ENCODE measurements at regions of chr1 and their contacts with region 1.

Region 1: DNA sequence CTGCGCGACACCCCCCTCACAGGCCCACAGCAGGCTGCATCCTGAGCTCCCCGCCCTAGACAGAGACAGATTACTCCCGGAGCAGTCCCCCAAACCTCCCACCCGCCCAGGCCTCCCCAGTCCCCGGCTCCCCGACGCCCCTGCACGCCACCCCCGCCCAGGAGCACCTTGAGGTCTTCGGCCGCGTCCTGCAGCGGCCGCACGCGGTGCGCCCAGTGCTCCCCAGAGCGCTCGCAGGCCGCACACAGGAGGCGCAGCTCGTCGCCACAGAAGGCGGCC is 709 bp downstream of the TRIM11 start:
- DNase-seq: peak in 3 of 4 experiments; percentile 43 to 68 (median 68)
- ATAC-seq: peak; percentile 75
- H3K4me3 ChIP-seq: peak overlapping the region; percentile 100
- H3K27ac ChIP-seq: peak overlapping the region; percentile 96
- H3K4me1 ChIP-seq: peaks cover 47 to 75% of the 10 kb centered on the region in 2 experiments
- H3K27me3 ChIP-seq: no peaks in the 10 kb centered on the region
- CTCF ChIP-seq: no peak; a peak in 1 of 6 replicates
- EP300 ChIP-seq: no peak
- POLR2A ChIP-seq: no peak
- RAD21 ChIP-seq: no peak

Region 2: GRCh38 chr1:228340686-228341449 is 65.1 kb before region 1 on chr1:
- CTCF ChIA-PET with region 1: no interaction called
- POLR2A ChIA-PET with region 1: no interaction called
- in situ Hi-C with region 1: no loop called
- intact Hi-C with region 1: loop called (anchors 2 kb)
- DNase-seq: peak; percentile 82 to 88 (median 86)
- ATAC-seq: peak; percentile 88
- H3K4me3 ChIP-seq: peak overlapping the region; percentile 10; the same call in 1 of the 2 replicates
- H3K27ac ChIP-seq: no peak overlapping the region
- H3K4me1 ChIP-seq: peaks cover 5 to 59% of the 10 kb centered on the region in 2 experiments; a peak in 3 of 5 replicates
- H3K27me3 ChIP-seq: peaks cover 0 to 29% of the 10 kb centered on the region in 2 experiments; a peak in 3 of 5 replicates
- CTCF ChIP-seq: peak; percentile 79 to 88 (median 80)
- EP300 ChIP-seq: peak; percentile 77
- POLR2A ChIP-seq: no peak
- RAD21 ChIP-seq: peak; percentile 79 to 88